Activated T-helper 1 cell treated with anti-CD3 and anti-CD28 coated beads, Interleukin-12 subunit alpha, Interleukin-12 subunit beta, Interleukin-2, Interleukin-4 antibody, amounts not matched to agents 30 ng/mL and 10 ng/mL and 1 ng/mL, durations not matched to agents 14 hours and 24 hours and 36 hours (primary cell): ENCODE measurements at regions of chr3 and their contacts with region 1.

Region 1: DNA sequence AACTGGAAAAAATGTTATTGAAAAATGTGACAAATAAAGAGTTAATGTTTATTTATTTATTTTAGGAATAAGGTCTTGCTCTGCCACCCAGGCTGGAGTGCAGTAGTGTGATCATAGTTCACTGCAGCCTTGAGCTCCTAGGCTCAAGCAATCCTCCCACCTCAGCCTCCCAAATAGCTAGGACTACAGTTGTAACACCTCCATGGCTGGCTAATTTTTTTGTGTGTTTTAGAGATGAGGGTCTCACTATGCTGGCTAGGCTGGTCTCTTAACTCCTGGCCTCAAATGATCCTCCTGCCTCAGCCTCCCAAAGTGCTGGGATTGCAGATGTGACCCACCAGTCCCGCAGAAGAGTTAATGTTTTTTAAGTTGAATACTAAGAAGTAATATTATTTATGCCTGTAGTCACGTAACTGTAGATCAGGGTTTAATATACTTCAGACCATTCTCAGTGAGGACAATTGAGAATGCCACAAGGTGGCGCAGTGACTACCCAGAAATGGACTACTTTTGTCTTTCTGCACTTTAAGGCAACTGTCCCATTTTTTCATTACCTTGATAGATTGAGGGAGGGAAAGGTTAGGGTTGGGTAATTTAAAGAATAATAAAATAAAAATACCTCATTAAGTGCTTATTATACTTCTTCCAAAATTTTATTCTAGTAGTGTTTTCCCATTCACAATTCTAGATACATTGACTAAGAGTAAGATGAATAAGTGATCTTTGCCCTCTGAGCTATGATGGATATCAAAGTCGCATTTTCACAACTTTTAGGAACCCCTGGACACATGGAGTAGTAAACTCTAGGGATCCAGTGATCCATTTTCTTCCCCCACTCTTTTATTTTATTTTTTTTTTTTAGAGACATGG is 6.0 kb downstream of the MUC13 start:
- DNase-seq: peak; percentile 33
- H3K4me3 Mint-ChIP-seq: no peak overlapping the region
- H3K27ac Mint-ChIP-seq: no peak overlapping the region
- H3K4me1 Mint-ChIP-seq: no peaks in the 10 kb centered on the region
- H3K27me3 Mint-ChIP-seq: peaks cover 45% of the 10 kb centered on the region

Region 2: DNA sequence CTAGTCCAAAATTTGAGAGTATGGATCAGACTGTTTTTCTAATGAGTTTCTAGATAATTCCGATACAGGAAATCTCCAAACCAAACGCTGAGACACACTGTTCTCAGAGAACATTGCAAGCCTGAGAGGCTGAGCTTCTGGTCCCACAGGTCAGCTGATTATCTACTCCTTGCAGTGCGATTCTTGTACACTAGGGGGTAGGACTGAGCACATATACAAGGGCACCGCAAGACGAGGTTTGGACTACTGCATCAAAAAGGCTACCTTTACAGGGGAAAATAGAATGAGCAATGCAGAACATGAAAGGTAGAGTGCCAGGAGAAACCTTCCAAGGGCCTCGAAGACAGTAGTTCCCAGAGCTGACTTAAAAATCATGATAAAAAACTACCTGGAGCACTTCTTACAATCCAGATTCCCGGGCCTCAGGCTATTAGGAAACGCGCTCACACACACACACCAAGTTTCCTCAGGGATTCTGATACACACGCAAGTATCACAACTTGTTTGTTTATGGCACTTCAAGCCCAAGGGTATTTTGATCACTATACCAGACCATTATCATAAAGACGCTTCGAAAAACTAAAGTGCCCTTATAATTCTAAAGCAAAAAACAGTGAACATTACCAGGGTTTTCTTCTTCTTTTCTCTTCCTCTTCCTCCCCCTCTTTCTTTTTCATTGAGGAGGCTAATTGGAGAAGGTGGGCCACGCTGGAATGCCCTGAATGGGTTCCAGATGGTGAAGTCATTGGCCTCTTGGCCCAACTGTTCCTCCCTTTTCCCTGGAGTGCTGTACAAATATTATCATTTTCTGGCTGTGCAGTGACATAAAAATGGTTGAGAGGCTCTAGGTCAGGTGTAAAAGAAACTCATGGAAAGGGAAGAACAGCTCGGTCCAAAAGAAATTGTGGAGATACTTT is 222.2 kb after region 1 on chr3:
- intact Hi-C with region 1: loop called (anchors 5 kb)
- DNase-seq: peak; percentile 48
- H3K4me3 Mint-ChIP-seq: no peak overlapping the region
- H3K27ac Mint-ChIP-seq: no peak overlapping the region
- H3K4me1 Mint-ChIP-seq: peaks cover 26% of the 10 kb centered on the region
- H3K27me3 Mint-ChIP-seq: peaks cover 40% of the 10 kb centered on the region

Region 3: GRCh38 chr3:125202197-125202596 is 273.6 kb after region 1 on chr3:
- intact Hi-C with region 1: loop called (anchors 1 kb)
- DNase-seq: no peak
- H3K4me3 Mint-ChIP-seq: no peak overlapping the region
- H3K27ac Mint-ChIP-seq: no peak overlapping the region
- H3K4me1 Mint-ChIP-seq: no peaks in the 10 kb centered on the region
- H3K27me3 Mint-ChIP-seq: peaks cover 28% of the 10 kb centered on the region

Region 4: DNA sequence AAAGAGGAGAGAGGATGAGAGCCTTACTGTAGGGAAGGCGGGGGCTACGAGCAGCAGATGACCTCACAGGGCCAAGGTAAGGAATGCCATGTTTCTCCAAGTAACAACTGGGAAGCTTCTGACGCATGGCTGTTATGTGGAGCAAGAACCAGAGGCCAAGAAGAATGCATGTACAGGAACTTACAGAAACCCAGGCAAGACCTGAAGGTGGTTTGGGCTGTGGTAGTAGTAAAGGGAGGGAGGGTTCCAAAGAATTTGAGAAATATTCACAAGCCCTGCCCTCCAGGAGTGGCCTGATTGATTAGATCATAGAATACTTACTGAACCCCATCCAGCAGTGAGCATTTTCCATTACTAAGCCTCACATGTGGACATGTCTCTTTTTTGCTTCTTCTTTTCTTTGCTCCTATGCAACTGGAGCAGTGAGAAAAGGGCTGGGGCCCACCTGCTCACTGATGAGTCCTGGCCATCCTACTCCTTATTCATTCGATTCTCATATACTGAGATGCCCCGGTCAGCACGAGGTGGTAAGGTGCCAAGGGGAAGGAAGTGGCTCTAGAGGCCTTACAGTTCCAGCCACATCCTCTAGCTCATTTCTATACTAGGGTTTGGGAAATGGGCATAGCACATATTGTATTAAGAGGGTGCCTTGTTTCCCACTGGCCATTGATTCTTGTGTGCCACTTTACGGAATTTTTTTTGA is 292.3 kb after region 1 on chr3:
- intact Hi-C with region 1: no loop called
- DNase-seq: no peak
- H3K4me3 Mint-ChIP-seq: no peak overlapping the region
- H3K27ac Mint-ChIP-seq: no peak overlapping the region
- H3K4me1 Mint-ChIP-seq: peaks cover 15% of the 10 kb centered on the region
- H3K27me3 Mint-ChIP-seq: peaks cover 5% of the 10 kb centered on the region

Region 5: GRCh38 chr3:125437631-125438435 is 509.3 kb after region 1 on chr3:
- intact Hi-C with region 1: loop called (anchors 1 kb)
- DNase-seq: peak; percentile 37
- H3K4me3 Mint-ChIP-seq: no peak overlapping the region
- H3K27ac Mint-ChIP-seq: no peak overlapping the region
- H3K4me1 Mint-ChIP-seq: no peaks in the 10 kb centered on the region
- H3K27me3 Mint-ChIP-seq: peaks cover 2% of the 10 kb centered on the region